Activated CD4-positive, alpha-beta T cell treated with anti-CD3 and anti-CD28 coated beads for 36 hours (primary cell): ENCODE measurements at regions of chr11 and their contacts with region 1.

Region 1: DNA sequence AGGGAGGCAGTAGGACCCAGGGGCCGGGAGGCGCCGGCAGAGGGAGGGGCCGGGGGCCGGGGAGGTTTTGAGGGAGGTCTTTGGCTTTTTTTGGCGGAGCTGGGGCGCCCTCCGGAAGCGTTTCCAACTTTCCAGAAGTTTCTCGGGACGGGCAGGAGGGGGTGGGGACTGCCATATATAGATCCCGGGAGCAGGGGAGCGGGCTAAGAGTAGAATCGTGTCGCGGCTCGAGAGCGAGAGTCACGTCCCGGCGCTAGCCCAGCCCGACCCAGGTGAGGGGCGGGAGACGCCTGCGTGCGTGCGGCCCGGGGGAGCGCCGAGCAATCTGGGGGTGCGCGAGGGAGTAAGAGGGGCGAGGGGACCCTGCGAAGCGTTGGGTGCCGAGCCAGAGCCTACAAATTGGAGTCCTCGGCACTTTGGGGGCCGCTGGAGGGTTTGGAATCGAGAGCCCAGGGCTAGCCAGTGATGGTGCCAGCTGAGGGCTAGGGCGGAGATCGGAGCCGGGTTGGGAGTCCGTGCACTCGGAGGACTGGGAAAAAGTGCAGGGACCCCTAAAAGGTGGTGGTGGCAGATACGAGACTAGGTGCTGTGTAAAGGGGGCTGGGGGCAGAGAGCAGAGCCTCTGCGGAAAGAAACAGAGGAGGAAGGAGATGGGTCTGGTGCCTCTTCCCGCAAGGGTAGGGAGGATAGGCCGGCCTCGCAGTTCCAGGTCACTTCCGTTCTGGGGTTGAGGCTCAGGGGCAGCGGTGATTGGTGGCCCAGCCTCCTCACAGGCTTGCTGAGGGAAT is at the start of gene SERPINH1:
- DNase-seq: peak; percentile 88
- ATAC-seq: peak; percentile 93
- H3K4me3 Mint-ChIP-seq: peak within 1 kb of the TSS; percentile 99
- H3K27ac Mint-ChIP-seq: peak within 1 kb of the TSS; percentile 98
- H3K4me1 Mint-ChIP-seq: peaks cover 28% of the 10 kb centered on the region
- H3K27me3 Mint-ChIP-seq: no peaks in the 10 kb centered on the region
- total RNA-seq, gene SERPINH1: 20.3 to 23.1 TPM

Region 2: DNA sequence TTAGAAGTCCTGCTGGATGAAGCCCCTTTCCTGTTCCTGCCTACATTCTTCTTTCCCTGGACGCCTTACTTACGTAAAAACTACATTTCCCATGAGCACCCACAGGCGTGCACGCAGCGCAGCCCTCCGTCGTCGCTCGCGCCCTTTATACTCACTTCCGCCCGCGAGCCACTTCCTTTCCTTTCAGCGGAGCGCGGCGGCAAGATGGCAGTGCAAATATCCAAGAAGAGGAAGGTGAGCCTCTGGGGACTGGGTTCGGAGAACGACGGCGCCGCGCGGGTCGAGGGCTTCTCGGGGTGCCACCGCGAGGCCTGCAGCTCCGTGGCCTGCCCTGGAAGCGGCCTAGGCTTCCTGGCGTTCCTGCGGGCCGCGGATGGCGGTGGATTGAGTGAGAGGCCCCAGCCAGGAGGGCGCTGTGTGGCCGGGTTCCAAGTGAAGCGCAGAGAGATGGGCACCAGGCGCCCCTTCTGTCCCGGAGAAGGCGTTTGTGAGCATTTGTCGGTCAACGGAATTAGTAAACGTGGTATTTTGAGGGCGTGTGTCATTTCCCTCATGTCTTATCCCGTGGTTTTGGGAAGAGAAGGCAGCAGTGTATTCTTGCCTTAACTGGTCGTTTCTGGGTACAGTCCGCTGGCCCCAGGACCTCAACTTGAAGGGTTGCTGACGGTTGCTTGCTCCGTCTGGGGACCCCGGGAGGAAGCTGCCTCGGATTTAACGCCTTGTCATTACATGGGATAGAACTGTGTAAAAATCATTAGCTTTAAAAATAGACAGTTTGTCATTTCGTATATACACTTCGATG is 162.7 kb before region 1 on chr11 and contains the start of gene RPS3:
- CTCF ChIA-PET with region 1: no interaction called
- POLR2A ChIA-PET with region 1: interaction called, 4 read pairs
- intact Hi-C with region 1: loop called in 1 of 2 experiments (anchors 1 kb)
- DNase-seq: peak; percentile 94
- ATAC-seq: peak; percentile 92
- H3K4me3 Mint-ChIP-seq: peak within 1 kb of the TSS; percentile 96
- H3K27ac Mint-ChIP-seq: peak within 1 kb of the TSS; percentile 98
- H3K4me1 Mint-ChIP-seq: peaks cover 41% of the 10 kb centered on the region
- H3K27me3 Mint-ChIP-seq: no peaks in the 10 kb centered on the region
- total RNA-seq, gene RPS3: 4,536 to 4,569 TPM

Region 3: GRCh38 chr11:75582895-75583717 is 20.9 kb after region 1 on chr11:
- CTCF ChIA-PET with region 1: interaction called, 7 read pairs
- POLR2A ChIA-PET with region 1: interaction called, 3 read pairs
- intact Hi-C with region 1: loop called (anchors 1 kb)
- DNase-seq: peak; percentile 79
- ATAC-seq: peak; percentile 94
- H3K4me3 Mint-ChIP-seq: peak overlapping the region; percentile 75
- H3K27ac Mint-ChIP-seq: peak overlapping the region; percentile 83
- H3K4me1 Mint-ChIP-seq: peaks cover 13% of the 10 kb centered on the region
- H3K27me3 Mint-ChIP-seq: no peaks in the 10 kb centered on the region

Region 4: DNA sequence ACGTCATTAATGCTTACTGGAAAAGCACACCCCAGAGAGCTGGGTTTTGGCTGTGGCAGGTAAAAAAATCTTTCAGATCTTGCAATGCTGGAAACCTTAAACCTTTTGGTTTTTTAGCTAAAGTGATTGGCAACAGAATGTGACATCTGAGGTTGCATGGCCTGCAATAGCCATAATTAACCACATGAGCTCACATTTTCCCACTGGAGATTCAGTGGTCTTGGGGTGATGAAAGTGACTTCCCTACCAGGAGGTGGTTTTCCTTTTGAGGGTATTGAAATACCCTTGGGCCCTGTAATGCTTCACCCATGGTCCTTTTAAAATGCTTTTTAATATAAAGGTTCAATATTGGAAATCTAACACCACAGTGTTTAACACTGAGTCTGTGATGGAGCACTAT is 451.3 kb after region 1 on chr11:
- CTCF ChIA-PET with region 1: no interaction called
- POLR2A ChIA-PET with region 1: no interaction called
- intact Hi-C with region 1: no loop called
- DNase-seq: no peak
- ATAC-seq: no peak
- H3K4me3 Mint-ChIP-seq: no peak overlapping the region
- H3K27ac Mint-ChIP-seq: no peak overlapping the region
- H3K4me1 Mint-ChIP-seq: no peaks in the 10 kb centered on the region
- H3K27me3 Mint-ChIP-seq: no peaks in the 10 kb centered on the region